Transverse colon (tissue), 4 donors: ENCODE measurements at regions of chr13 and their contacts with region 1.

Region 1: GRCh38 chr13:84934911-84935310 is 864.3 kb downstream of the SLITRK6 start:
- DNase-seq: no peak
- H3K4me3 ChIP-seq: peak overlapping the region in 1 of 4 donors; percentile 33
- H3K27ac ChIP-seq: no peak overlapping the region
- H3K4me1 ChIP-seq: no peaks in the 10 kb centered on the region
- H3K27me3 ChIP-seq: no peaks in the 10 kb centered on the region
- CTCF ChIP-seq: no peak
- EP300 ChIP-seq: no peak
- POLR2A ChIP-seq: no peak

Region 2: DNA sequence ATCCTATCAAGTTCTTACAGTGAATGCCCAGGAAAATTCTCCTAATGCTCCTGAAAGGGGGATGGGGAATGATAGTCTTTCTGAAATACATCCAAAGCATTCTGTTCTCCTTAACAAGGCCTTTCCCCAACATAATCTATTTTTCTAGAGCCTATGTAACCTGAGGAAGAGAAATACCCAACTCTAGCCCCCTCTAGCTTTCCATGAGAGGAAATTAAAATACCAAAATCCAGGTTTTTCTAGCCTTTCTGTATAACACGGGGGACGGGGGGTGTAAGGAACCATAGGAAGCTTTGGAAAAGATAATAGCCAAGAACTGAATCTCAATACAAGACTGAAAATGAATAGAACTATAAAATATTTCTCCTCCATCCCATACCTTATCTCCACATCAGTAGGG is 48.4 kb after region 1 on chr13:
- in situ Hi-C with region 1: no loop called
- intact Hi-C with region 1: loop called (anchors 2 kb)
- DNase-seq: no peak
- H3K4me3 ChIP-seq: no peak overlapping the region
- H3K27ac ChIP-seq: no peak overlapping the region
- H3K4me1 ChIP-seq: no peaks in the 10 kb centered on the region
- H3K27me3 ChIP-seq: no peaks in the 10 kb centered on the region
- CTCF ChIP-seq: no peak
- EP300 ChIP-seq: no peak
- POLR2A ChIP-seq: no peak